HEK293T (cell line): ENCODE measurements at regions of chr6 and their contacts with region 1.

Region 1: GRCh38 chr6:8131256-8131897 is 29.0 kb upstream of the EEF1E1 start:
- DNase-seq: peak; percentile 71

Region 2: GRCh38 chr6:8149350-8149749 is 18.0 kb after region 1 on chr6:
- CTCF ChIA-PET with region 1: no interaction called
- POLR2A ChIA-PET with region 1: no interaction called
- DNase-seq: no peak

Region 3: DNA sequence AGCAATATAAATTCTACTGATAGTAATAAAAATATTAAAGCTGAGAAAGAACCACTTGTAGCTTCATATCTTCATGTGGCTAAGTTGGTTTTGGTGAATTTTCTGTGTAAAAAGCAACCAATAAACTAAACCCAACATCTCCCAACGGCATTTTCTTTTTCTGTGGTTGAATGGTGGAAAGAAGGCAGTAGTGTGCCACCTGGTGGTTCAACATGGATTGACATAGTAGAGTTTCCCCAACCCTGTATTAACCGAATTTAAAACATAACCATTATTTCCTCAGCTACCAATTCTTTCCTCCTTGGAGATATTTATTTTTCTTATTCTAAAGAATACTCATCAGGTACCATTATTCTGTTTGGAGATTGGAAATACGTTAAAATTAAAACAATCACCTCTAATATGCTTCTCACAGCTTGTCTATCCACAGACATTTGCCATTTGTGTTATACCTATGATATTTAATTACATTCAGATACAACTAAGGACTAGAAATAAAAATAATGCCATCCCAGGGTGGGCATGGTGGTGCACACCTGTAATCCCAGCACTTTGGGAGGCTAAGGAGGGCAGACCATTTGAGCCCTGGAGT is 88.1 kb after region 1 on chr6:
- CTCF ChIA-PET with region 1: interaction called, 141 read pairs
- POLR2A ChIA-PET with region 1: interaction called, 6 read pairs
- DNase-seq: peak; percentile 48